ENCODE measurements at regions of chr11 and their contacts with region 1.

Region 1: GRCh38 chr11:119323538-119324033 is 6.7 kb upstream of the MCAM start:
- DNase-seq: peak; percentile 76
- H3K4me3 ChIP-seq: no peak overlapping the region
- H3K27ac ChIP-seq: no peak overlapping the region
- H3K4me1 ChIP-seq: peaks cover 39% of the 10 kb centered on the region
- H3K27me3 ChIP-seq: no peaks in the 10 kb centered on the region
- CTCF ChIP-seq: peak; percentile 80 to 86
- POLR2A ChIP-seq: no peak

Region 2: GRCh38 chr11:118791111-118791965 is 532.2 kb before region 1 on chr11 and contains the start of gene DDX6:
- CTCF ChIA-PET with region 1: no interaction called
- POLR2A ChIA-PET with region 1: no interaction called
- dilution Hi-C with region 1: no loop called
- intact Hi-C with region 1: loop called (anchors 2 kb)
- DNase-seq: peak; percentile 86
- H3K4me3 ChIP-seq: peak within 1 kb of the TSS; percentile 70 to 87 (median 84)
- H3K27ac ChIP-seq: peak within 1 kb of the TSS; percentile 89
- H3K4me1 ChIP-seq: peaks cover 21% of the 10 kb centered on the region
- H3K27me3 ChIP-seq: no peaks in the 10 kb centered on the region
- CTCF ChIP-seq: peak; percentile 7 to 38
- POLR2A ChIP-seq: no peak
- total RNA-seq, gene DDX6: 132 and 138 TPM in 2 replicates

Region 3: DNA sequence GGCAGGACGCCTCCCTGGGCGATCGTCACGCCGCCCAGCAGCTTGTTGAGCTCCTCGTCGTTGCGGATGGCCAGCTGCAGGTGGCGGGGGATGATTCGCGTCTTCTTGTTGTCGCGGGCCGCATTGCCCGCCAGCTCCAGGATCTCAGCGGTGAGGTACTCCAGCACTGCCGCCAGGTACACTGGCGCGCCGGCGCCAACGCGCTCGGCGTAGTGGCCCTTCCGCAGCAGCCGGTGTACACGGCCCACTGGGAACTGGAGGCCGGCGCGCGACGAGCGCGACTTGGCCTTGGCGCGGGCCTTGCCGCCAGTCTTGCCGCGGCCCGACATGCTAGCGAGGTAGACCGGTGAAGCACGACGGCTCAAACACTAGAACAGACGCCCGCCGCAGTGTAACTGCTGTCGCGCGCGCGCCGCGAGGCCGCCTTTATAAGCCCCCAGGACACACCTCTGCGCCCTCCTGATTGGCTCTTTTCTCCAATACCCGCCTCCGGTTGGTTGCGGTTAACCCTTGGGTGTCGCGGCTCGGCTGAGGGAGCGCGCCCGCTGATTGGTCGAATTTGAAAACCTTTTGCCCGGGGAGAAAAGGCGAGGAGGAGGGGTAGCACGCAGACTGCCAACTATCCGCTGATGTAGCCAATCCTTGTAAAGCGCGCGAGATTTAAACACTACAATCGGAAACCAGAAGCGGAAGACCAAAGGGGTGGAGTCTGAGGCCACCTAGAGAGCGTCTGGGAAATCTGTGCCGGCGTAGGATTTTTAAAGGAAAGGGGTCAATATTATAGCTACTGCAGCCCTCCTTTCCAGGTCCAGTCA is 228.3 kb before region 1 on chr11:
- CTCF ChIA-PET with region 1: interaction called, 5 read pairs
- POLR2A ChIA-PET with region 1: interaction called, 9 read pairs
- dilution Hi-C with region 1: no loop called
- intact Hi-C with region 1: loop called (anchors 2 kb)
- DNase-seq: peak; percentile 100
- H3K4me3 ChIP-seq: peak overlapping the region; percentile 70 to 95 (median 90)
- H3K27ac ChIP-seq: peak overlapping the region; percentile 59
- H3K4me1 ChIP-seq: peaks cover 27% of the 10 kb centered on the region
- H3K27me3 ChIP-seq: no peaks in the 10 kb centered on the region
- CTCF ChIP-seq: peak in 1 of 2 donors; percentile 1
- POLR2A ChIP-seq: peak; percentile 100

Region 4: GRCh38 chr11:119144825-119145486 is 178.6 kb before region 1 on chr11:
- CTCF ChIA-PET with region 1: interaction called, 3 read pairs
- POLR2A ChIA-PET with region 1: no interaction called
- dilution Hi-C with region 1: no loop called
- intact Hi-C with region 1: loop called (anchors 1 kb)
- DNase-seq: peak; percentile 75
- H3K4me3 ChIP-seq: no peak overlapping the region
- H3K27ac ChIP-seq: no peak overlapping the region
- H3K4me1 ChIP-seq: peaks cover 4% of the 10 kb centered on the region
- H3K27me3 ChIP-seq: peaks cover 2 to 3% of the 10 kb centered on the region in 2 experiments
- CTCF ChIP-seq: peak; percentile 43 to 75
- POLR2A ChIP-seq: no peak

Region 5: GRCh38 chr11:119205574-119206510 is 117.7 kb before region 1 on chr11 and contains the start of gene CBL:
- CTCF ChIA-PET with region 1: interaction called, 28 read pairs
- POLR2A ChIA-PET with region 1: no interaction called
- dilution Hi-C with region 1: no loop called
- intact Hi-C with region 1: loop called (anchors 1 kb)
- DNase-seq: peak; percentile 90
- H3K4me3 ChIP-seq: peak within 1 kb of the TSS; percentile 88 to 97 (median 93)
- H3K27ac ChIP-seq: peak within 1 kb of the TSS; percentile 55
- H3K4me1 ChIP-seq: peaks cover 17% of the 10 kb centered on the region
- H3K27me3 ChIP-seq: no peaks in the 10 kb centered on the region
- CTCF ChIP-seq: peak; percentile 81 to 95
- POLR2A ChIP-seq: peak; percentile 35
- total RNA-seq, gene CBL: 40.1 and 41.5 TPM in 2 replicates

Region 6: GRCh38 chr11:119284344-119285157 is 39.0 kb before region 1 on chr11:
- CTCF ChIA-PET with region 1: no interaction called
- POLR2A ChIA-PET with region 1: no interaction called
- dilution Hi-C with region 1: no loop called
- intact Hi-C with region 1: no loop called
- DNase-seq: peak; percentile 39
- H3K4me3 ChIP-seq: no peak overlapping the region
- H3K27ac ChIP-seq: no peak overlapping the region
- H3K4me1 ChIP-seq: no peaks in the 10 kb centered on the region
- H3K27me3 ChIP-seq: no peaks in the 10 kb centered on the region
- CTCF ChIP-seq: peak; percentile 11 to 29
- POLR2A ChIP-seq: no peak

Region 7: DNA sequence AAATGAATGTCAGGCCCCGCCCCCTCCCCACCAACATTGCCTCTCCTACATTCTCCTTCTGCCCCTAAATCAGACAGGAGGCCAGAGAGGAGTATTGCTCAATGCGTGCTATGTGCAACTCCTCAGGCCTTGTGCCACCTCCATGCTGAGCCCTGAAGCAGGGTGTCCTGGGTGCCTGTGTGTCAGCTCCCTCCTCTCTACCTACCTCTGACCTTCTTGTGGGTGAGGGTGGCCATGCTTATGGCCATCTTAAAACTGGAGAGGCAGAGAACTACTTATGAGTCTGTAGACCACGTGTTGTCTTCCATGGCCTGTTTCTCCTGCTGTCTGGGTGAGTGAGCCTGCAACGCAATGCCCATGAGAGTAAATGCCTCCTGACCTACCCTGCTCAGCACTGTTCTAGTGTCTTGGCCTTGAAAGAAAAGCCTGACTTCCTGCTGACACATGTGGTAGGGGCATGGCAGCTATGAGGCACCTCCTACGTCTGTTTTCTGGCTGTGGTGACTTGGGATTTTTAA is 17.2 kb before region 1 on chr11:
- CTCF ChIA-PET with region 1: interaction called, 136 read pairs
- POLR2A ChIA-PET with region 1: interaction called, 17 read pairs
- dilution Hi-C with region 1: no loop called
- intact Hi-C with region 1: loop called (anchors 1 kb)
- DNase-seq: peak; percentile 39
- H3K4me3 ChIP-seq: no peak overlapping the region
- H3K27ac ChIP-seq: no peak overlapping the region
- H3K4me1 ChIP-seq: peaks cover 2% of the 10 kb centered on the region
- H3K27me3 ChIP-seq: no peaks in the 10 kb centered on the region
- CTCF ChIP-seq: no peak
- POLR2A ChIP-seq: no peak

Region 8: DNA sequence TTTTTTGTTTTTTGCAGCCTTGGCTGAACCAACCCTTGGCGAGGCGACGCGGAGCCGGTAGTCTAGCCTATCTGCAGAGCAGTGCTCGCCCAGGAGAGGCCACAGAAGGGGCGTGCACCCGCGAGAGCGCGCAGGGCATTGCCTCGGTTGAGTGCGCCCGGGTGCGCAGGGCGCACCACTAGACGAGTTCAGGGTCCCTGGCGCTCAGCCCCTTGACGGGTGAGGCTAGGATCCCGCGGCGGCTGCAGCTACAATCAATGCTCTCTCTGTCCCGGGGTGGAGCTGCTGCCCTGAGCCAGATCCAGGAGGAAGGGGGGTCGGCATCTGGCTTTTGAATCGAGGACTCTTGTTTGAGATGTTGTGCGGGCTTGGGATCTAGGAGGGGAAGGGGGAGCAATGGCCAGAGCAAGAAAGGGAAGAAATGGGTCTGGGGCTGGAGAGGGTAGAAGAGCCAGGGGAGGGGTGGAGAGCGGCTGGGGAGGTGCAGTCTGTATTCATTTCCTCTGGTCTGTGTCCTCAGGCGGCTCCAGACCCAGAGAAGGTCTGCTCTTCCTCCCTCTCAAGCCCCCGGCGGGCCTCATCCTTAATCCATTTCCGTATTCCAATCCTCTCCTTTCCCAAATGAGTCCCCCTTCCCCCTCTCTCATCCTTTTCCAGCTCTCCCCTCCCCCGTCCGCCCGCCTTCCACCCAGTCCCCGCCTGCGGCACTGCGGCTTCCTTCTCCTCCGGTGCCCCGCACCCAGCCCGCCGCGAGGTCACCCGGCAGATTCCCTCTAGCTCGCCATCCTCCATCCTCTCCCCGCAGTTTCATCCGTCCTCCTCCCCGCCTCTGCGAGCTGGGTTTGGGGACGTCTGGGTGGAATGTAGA is 98.6 kb after region 1 on chr11:
- CTCF ChIA-PET with region 1: no interaction called
- POLR2A ChIA-PET with region 1: no interaction called
- dilution Hi-C with region 1: no loop called
- intact Hi-C with region 1: no loop called
- DNase-seq: no peak
- H3K4me3 ChIP-seq: no peak overlapping the region
- H3K27ac ChIP-seq: no peak overlapping the region
- H3K4me1 ChIP-seq: no peaks in the 10 kb centered on the region
- H3K27me3 ChIP-seq: peaks cover 26 to 33% of the 10 kb centered on the region in 2 experiments
- CTCF ChIP-seq: no peak
- POLR2A ChIP-seq: no peak